ENCODE measurements at regions of chr16 and their contacts with region 1.

Region 1: GRCh38 chr16:75758215-75758614 is 31.9 kb upstream of the CPHXL start:
- DNase-seq: no peak
- ATAC-seq: peak; percentile 66
- H3K4me3 ChIP-seq: no peak overlapping the region
- H3K27ac ChIP-seq: no peak overlapping the region
- H3K4me1 ChIP-seq: peaks cover 0 to 9% of the 10 kb centered on the region in 2 donors
- H3K27me3 ChIP-seq: no peaks in the 10 kb centered on the region
- CTCF ChIP-seq: no peak

Region 2: GRCh38 chr16:75471723-75472633 is 286.2 kb before region 1 on chr16:
- intact Hi-C with region 1: loop called in 1 of 2 experiments (anchors 10 kb)
- DNase-seq: peak in 2 of 4 donors; percentile 17 to 76
- ATAC-seq: peak; percentile 98
- H3K4me3 ChIP-seq: no peak overlapping the region
- H3K27ac ChIP-seq: no peak overlapping the region
- H3K4me1 ChIP-seq: no peaks in the 10 kb centered on the region
- H3K27me3 ChIP-seq: no peaks in the 10 kb centered on the region
- CTCF ChIP-seq: peak; percentile 71 to 77